ENCODE measurements at regions of chr4 and their contacts with region 1.

Region 1: GRCh38 chr4:24488399-24489164 is 95.8 kb downstream of the DHX15 start:
- DNase-seq: peak; percentile 82
- H3K4me3 ChIP-seq: no peak overlapping the region
- H3K27ac ChIP-seq: no peak overlapping the region
- H3K4me1 ChIP-seq: no peaks in the 10 kb centered on the region
- H3K27me3 ChIP-seq: no peaks in the 10 kb centered on the region
- CTCF ChIP-seq: peak; percentile 45 to 83 (median 78)
- EP300 ChIP-seq: no peak
- POLR2A ChIP-seq: no peak

Region 2: GRCh38 chr4:25144870-25145481 is 656.4 kb after region 1 on chr4:
- intact Hi-C with region 1: loop called (anchors 10 kb)
- DNase-seq: no peak
- H3K4me3 ChIP-seq: no peak overlapping the region
- H3K27ac ChIP-seq: no peak overlapping the region
- H3K4me1 ChIP-seq: no peaks in the 10 kb centered on the region
- H3K27me3 ChIP-seq: no peaks in the 10 kb centered on the region
- CTCF ChIP-seq: peak in 3 of 4 experiments; percentile 31 to 55 (median 38)
- EP300 ChIP-seq: no peak
- POLR2A ChIP-seq: no peak